GM12878 (cell line): ENCODE measurements at regions of chr2 and their contacts with region 1.

Region 1: DNA sequence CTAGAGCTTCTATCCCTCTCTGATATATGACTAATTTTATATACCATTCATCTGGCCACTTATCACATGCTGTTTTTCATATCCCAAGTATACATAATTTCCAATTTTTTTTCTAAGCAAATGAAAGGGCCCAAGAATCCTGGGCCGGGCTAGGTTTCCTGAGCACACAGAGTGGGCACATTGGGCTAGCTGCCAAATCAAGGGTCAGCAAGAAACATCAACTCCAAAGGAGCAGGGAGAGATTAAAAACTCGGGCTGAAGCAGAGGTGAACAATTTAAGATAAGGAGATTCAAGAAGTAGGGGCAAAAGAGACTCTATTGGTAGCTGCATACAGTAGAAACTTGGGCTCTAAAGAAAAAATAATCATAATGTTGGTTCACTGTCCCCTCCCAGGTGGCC is 39.0 kb downstream of the OLA1 start:
- DNase-seq: no peak
- ATAC-seq: no peak
- H3K4me3 ChIP-seq: no peak overlapping the region
- H3K27ac ChIP-seq: no peak overlapping the region
- H3K4me1 ChIP-seq: no peaks in the 10 kb centered on the region
- H3K27me3 ChIP-seq: no peaks in the 10 kb centered on the region
- CTCF ChIP-seq: no peak
- EP300 ChIP-seq: no peak
- POLR2A ChIP-seq: no peak
- RAD21 ChIP-seq: no peak

Region 2: GRCh38 chr2:174198822-174199564 is 10.3 kb before region 1 on chr2:
- CTCF ChIA-PET with region 1: interaction called, 3 read pairs
- POLR2A ChIA-PET with region 1: interaction called, 3 read pairs
- RAD21 ChIA-PET with region 1: no interaction called
- SMC1A ChIA-PET with region 1: interaction called, 11 read pairs
- in situ Hi-C with region 1: no loop called
- intact Hi-C with region 1: no loop called
- DNase-seq: no peak
- ATAC-seq: no peak
- H3K4me3 ChIP-seq: no peak overlapping the region
- H3K27ac ChIP-seq: no peak overlapping the region
- H3K4me1 ChIP-seq: no peaks in the 10 kb centered on the region
- H3K27me3 ChIP-seq: no peaks in the 10 kb centered on the region
- CTCF ChIP-seq: no peak
- EP300 ChIP-seq: no peak
- POLR2A ChIP-seq: no peak
- RAD21 ChIP-seq: no peak